ENCODE measurements at regions of chr20 and their contacts with region 1.

Region 1: GRCh38 chr20:62302341-62303058 is at the start of gene ADRM1:
- DNase-seq: peak; percentile 95 to 97 (median 95)
- H3K4me3 ChIP-seq: peak within 1 kb of the TSS; percentile 2 to 80 (median 71)
- H3K27ac ChIP-seq: peak within 1 kb of the TSS; percentile 97 to 99 (median 98)
- H3K4me1 ChIP-seq: peaks cover 20 to 36% of the 10 kb centered on the region in 2 donors
- H3K27me3 ChIP-seq: no peaks in the 10 kb centered on the region
- CTCF ChIP-seq: peak; percentile 72 to 99 (median 93)
- POLR2A ChIP-seq: peak; percentile 9 to 72
- total RNA-seq, gene ADRM1: 87.2 to 254 (median 162) TPM

Region 2: GRCh38 chr20:62219992-62220665 is 82.4 kb before region 1 on chr20 and contains the start of gene HRH3:
- intact Hi-C with region 1: no loop called
- DNase-seq: peak in 4 of 7 donors; percentile 29 to 68 (median 46)
- H3K4me3 ChIP-seq: peak within 1 kb of the TSS in 1 of 4 donors; percentile 45
- H3K27ac ChIP-seq: no peak within 1 kb of the TSS
- H3K4me1 ChIP-seq: peaks cover 10 to 13% of the 10 kb centered on the region in 2 donors
- H3K27me3 ChIP-seq: peaks cover 29% of the 10 kb centered on the region
- CTCF ChIP-seq: no peak
- POLR2A ChIP-seq: no peak
- total RNA-seq, gene HRH3: 0.06 to 0.08 TPM in 2 of 9 donors, not detected in the others

Region 3: DNA sequence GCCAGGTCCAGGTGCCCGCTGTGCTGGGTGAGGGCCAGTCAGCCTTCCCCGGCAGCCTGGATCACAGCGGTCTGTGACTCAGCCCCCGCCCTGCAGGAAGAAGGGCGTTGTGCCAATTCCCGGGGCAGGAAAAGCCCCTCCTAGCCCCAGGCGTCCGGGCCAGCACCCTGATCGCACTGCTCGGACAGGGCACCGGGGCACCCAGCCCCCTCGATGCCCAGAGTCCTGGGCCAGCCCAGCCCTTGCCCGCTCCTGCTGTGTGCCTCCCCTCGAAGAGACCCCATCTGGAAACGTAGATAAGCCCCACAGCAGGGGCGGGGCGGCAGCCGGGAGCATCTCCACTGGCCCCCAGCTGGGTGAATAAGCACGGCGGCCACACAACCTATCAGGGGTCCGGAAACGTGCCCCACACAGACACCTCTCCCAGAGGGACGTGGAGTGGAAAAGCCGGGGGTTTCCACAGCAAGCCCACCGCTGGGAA is 54.7 kb after region 1 on chr20:
- intact Hi-C with region 1: loop called in 1 of 2 experiments (anchors 10 kb)
- DNase-seq: peak; percentile 70 to 90 (median 85)
- H3K4me3 ChIP-seq: peak overlapping the region in 1 of 4 donors; percentile 45
- H3K27ac ChIP-seq: peak overlapping the region in 4 of 5 donors; percentile 84 to 90 (median 88)
- H3K4me1 ChIP-seq: peaks cover 52 to 55% of the 10 kb centered on the region in 2 donors
- H3K27me3 ChIP-seq: no peaks in the 10 kb centered on the region
- CTCF ChIP-seq: no peak
- POLR2A ChIP-seq: no peak

Region 4: GRCh38 chr20:62368976-62369814 is 66.7 kb after region 1 on chr20:
- intact Hi-C with region 1: loop called in 1 of 2 experiments (anchors 5 kb)
- DNase-seq: peak; percentile 61 to 89 (median 84)
- H3K4me3 ChIP-seq: peak overlapping the region in 2 of 4 donors; percentile 0 to 38
- H3K27ac ChIP-seq: peak overlapping the region in 4 of 5 donors; percentile 63 to 94 (median 78)
- H3K4me1 ChIP-seq: peaks cover 60 to 61% of the 10 kb centered on the region in 2 donors
- H3K27me3 ChIP-seq: no peaks in the 10 kb centered on the region
- CTCF ChIP-seq: peak in 3 of 6 experiments; percentile 32 to 39 (median 33)
- POLR2A ChIP-seq: peak in 1 of 2 donors; percentile 46

Region 5: DNA sequence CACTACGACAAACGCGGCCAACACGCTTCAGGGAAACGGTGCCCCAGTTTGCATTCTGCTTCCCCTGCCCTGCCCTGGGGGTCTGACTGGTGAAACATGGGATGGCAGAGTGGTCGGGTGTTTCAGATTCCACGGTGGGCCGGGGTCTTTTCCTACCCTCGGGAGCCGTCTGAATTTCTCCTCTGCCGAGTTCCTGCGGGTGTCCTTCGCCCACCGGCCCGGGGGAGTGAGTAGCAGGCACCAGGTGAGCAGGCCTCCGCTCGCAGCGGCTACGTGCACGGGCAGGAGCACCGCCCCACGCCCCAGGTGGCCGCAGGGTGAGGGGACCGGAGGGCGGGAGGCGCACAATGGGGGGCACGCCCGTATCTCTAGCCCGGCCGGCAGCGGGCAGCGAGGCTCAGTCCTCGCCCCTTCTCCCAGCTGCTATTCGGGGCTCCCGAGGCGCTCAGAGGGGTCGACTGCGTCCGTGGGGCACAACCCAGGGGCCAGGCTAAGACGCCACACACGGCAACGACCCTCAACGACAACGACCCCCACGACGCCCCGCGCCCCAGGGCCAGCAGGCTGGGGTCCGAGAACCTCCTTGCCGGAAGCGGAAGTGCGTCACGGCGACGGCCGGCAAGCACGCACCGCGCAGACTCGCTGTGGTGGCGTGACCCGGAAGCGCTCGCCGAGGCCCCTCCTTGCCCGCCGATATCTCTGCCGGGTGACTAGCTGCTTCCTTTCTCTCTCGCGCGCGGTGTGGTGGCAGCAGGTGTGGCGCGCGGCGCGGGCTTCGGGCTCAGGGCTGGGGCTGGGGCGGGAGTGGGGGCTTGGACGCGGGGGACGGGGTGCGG is 84.1 kb after region 1 on chr20 and contains the start of gene RPS21:
- intact Hi-C with region 1: loop called (anchors 2 to 5 kb)
- DNase-seq: peak; percentile 92 to 97 (median 95)
- H3K4me3 ChIP-seq: peak within 1 kb of the TSS; percentile 80 to 97 (median 88)
- H3K27ac ChIP-seq: peak within 1 kb of the TSS; percentile 54 to 91 (median 87)
- H3K4me1 ChIP-seq: peaks cover 17 to 30% of the 10 kb centered on the region in 2 donors
- H3K27me3 ChIP-seq: no peaks in the 10 kb centered on the region
- CTCF ChIP-seq: no peak
- POLR2A ChIP-seq: peak; percentile 43 to 80
- total RNA-seq, gene RPS21: 725 to 4,794 (median 1,551) TPM

Region 6: DNA sequence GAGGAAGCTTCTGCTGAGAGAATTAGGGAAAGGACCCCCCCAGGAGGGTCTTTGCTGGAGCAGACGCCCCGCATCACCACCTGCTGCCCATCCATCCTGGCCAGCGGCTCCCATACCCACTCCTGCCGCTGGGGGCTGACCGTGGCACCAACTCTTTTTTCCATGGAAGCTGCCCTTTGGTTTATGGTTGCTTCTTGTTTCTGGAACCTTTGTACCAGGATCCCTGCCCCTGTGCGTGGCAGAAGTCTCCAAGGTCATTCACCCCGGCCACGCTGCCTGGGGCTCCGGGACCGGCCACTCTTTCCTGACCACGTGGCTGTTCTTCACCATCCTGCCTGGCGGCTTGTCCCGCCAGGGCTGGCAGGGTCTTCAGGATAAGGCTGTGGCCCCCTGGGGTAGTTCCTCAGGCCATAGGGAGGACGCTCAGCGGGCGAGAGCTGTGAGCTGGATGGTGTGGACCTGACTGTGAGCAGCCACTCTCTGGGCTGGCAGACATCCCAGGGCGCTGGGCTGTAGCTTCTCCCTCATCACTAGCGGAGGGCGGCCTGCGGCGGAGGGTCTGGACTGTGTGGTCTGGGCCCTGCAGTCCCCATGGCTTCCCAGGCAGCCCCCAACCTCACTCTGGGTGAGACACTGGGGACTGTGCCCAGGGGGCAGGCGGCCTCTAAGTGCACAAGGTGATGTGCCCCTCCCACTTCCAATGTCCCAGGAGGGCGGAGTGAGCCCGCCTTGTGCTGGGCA is 147.6 kb after region 1 on chr20:
- intact Hi-C with region 1: no loop called
- DNase-seq: peak in 2 of 7 donors; percentile 33 to 44
- H3K4me3 ChIP-seq: no peak overlapping the region
- H3K27ac ChIP-seq: no peak overlapping the region
- H3K4me1 ChIP-seq: no peaks in the 10 kb centered on the region
- H3K27me3 ChIP-seq: no peaks in the 10 kb centered on the region
- CTCF ChIP-seq: no peak
- POLR2A ChIP-seq: no peak

Region 7: GRCh38 chr20:62477669-62478455 is 175.4 kb after region 1 on chr20:
- intact Hi-C with region 1: no loop called
- DNase-seq: no peak
- H3K4me3 ChIP-seq: no peak overlapping the region
- H3K27ac ChIP-seq: no peak overlapping the region
- H3K4me1 ChIP-seq: peaks cover 0 to 24% of the 10 kb centered on the region in 2 donors
- H3K27me3 ChIP-seq: peaks cover 7% of the 10 kb centered on the region
- CTCF ChIP-seq: peak in 1 of 6 experiments; percentile 16
- POLR2A ChIP-seq: no peak

Region 8: DNA sequence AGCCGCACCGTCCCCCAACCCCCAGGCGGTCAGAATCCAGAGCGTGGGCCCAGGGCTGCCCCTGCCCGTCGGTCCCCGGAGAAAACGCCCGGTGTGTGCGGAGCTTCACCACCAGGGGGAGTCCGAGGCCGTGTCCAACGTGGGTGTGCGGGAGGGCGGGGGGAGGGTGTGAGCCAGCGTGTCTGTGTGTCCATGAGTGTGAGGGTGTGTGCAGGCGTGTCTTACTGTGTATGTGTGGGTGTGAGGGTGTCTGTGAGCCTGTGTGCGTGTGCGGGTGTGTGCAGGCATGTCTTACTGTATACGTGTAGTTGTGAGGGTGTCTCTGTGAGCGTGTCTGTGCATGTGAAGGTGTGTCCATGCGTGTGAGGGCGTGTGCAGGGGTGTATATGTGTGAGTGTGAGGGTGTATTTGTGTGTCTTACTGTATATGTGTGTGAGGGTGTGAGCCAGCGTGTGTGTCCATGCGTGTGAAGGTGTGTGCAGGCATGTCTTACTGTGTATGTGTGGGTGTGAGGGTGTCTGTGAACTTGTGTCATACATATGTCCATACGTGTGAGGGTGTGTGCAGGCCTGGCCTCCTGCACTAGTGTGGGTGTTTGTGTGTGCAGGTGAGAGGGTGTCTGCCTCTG is 197.9 kb after region 1 on chr20:
- intact Hi-C with region 1: loop called in 1 of 2 experiments (anchors 10 kb)
- DNase-seq: peak; percentile 73 to 84 (median 80)
- H3K4me3 ChIP-seq: no peak overlapping the region
- H3K27ac ChIP-seq: no peak overlapping the region
- H3K4me1 ChIP-seq: peaks cover 0 to 14% of the 10 kb centered on the region in 2 donors
- H3K27me3 ChIP-seq: no peaks in the 10 kb centered on the region
- CTCF ChIP-seq: peak; percentile 70 to 93 (median 90)
- POLR2A ChIP-seq: no peak

Region 9: DNA sequence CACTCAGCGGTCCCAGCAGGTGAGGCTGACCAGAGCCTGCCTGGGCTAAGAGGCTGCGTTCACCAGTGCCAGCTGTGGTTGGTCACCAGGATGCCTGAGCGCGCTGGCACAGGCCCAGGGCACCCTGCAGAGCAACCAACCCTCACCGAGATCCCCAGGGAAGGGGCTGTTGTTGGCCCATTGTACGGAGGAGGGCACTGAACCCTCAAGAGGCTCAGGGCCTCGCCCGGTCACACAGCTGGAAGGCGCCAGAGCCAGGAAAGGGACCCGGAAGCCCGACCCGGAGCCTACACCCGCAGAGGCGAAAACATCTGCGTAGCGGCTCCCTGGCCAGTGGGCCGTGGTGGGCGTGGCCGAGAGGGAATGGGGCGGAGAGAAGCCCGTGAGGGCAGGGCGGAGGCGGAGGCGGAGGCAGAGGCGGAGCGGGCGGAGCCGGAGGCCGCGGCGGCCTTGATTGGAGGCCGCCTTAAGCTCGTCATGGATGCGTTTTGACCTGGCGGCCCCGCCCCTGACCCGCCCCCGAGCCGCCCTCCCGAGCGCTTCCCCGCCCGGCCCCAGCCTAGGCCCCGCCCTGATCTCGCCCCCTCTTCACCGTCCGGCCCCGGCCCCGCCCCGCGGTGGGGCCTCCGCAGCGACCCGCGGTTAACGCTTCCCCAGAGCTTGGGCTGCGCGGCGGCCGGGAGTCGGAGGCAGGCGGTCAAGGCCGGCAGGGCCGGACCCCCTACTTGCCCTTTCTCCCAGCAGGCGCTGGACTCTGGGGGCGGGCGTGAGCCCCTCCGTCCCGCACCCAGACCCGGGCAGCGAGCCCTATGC is 491.6 kb after region 1 on chr20:
- intact Hi-C with region 1: loop called in 1 of 2 experiments (anchors 10 kb)
- DNase-seq: peak; percentile 95 to 98 (median 96)
- H3K4me3 ChIP-seq: peak overlapping the region in 2 of 4 donors; percentile 38 to 95
- H3K27ac ChIP-seq: peak overlapping the region; percentile 77 to 96 (median 89)
- H3K4me1 ChIP-seq: peaks cover 8 to 28% of the 10 kb centered on the region in 2 donors
- H3K27me3 ChIP-seq: no peaks in the 10 kb centered on the region
- CTCF ChIP-seq: no peak
- POLR2A ChIP-seq: peak; percentile 62 to 77